ENCODE measurements at regions of chr9 and their contacts with region 1.

Region 1: DNA sequence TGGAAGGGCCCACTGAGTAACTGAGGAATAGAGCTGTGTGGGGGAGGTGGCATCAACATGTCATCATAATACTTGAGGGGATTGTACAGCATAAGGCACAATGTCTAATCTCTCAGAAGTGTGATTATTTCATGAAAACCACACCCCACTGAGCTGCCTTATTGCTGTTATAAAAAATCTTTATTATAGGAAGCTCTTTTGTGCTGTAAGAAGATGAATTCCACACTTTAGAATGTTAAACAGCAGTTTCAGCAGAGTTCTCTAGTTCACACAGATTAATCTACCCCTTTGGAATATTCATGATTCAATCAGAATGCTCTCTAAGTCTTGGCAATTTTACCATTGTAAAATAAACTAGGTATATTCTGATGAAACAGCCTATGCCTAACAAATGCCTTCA is 1389.6 kb downstream of the PTPRD start:
- DNase-seq: no peak
- H3K4me3 ChIP-seq: no peak overlapping the region
- H3K27ac ChIP-seq: no peak overlapping the region
- H3K4me1 ChIP-seq: no peaks in the 10 kb centered on the region
- H3K27me3 ChIP-seq: no peaks in the 10 kb centered on the region
- CTCF ChIP-seq: no peak
- POLR2A ChIP-seq: no peak

Region 2: GRCh38 chr9:9275601-9276000 is 52.4 kb after region 1 on chr9:
- intact Hi-C with region 1: no loop called
- DNase-seq: no peak
- H3K4me3 ChIP-seq: no peak overlapping the region
- H3K27ac ChIP-seq: no peak overlapping the region
- H3K4me1 ChIP-seq: no peaks in the 10 kb centered on the region
- H3K27me3 ChIP-seq: no peaks in the 10 kb centered on the region
- CTCF ChIP-seq: no peak
- POLR2A ChIP-seq: no peak

Region 3: DNA sequence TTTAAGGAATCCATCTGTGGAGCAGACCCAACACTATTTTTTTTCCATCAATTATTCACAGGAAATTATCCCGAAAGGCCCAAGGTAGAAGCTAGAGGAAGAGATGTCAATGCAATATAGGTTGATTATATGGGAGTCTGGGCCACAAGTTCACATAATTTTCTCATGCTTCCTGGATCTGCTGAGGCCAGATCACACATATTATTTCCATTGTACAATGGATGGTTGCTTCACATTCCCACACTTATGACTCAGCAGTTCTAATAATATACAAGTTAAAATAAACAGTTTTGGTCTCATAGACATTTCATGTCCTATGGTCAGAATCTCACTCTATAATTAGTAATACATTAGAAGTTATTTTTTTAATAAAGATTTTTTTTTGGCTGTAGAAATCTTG is 1455.6 kb after region 1 on chr9:
- intact Hi-C with region 1: loop called (anchors 5 kb)
- DNase-seq: no peak
- H3K4me3 ChIP-seq: no peak overlapping the region
- H3K27ac ChIP-seq: no peak overlapping the region
- H3K4me1 ChIP-seq: no peaks in the 10 kb centered on the region
- H3K27me3 ChIP-seq: no peaks in the 10 kb centered on the region
- CTCF ChIP-seq: no peak
- POLR2A ChIP-seq: no peak

Measured in vagina (tissue), 2 donors.